ENCODE measurements at regions of chr4 and their contacts with region 1.

Region 1: DNA sequence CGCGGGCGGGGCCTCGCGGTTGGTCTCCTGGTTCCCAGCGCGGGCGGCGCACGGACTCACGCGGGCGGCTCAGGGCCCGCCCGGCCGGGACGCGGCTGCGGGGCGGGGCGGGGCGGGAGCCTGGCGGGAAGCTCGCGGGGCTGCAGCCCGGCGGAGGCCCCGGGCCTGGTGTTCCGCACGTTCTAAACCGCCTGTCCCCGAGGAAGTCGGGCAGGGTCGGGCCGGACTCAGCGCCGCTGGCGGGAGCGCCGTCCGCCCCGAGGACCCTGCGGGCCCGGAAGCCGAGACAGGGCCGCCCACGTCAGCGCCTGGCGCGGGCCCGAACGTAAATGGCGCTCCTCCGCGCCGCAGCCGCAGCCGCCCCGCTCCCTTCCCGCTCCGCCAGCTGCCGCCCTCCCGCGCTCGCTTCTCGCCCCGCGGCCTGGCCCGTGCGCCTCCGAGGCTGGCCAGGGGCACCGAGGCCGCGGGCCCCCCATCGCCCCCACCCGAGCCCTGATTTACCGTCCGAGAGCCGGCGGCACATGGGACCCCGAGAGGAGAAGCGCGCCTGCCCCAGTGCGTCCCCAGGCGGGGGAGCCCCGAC is 309 bp upstream of the CTBP1 start:
- DNase-seq: peak; percentile 89
- H3K4me3 ChIP-seq: peak overlapping the region; percentile 80 to 92 (median 90)
- H3K27ac ChIP-seq: peak overlapping the region; percentile 95 to 99 (median 96)
- H3K4me1 ChIP-seq: peaks cover 39 to 47% (median 43%) of the 10 kb centered on the region in 4 donors
- H3K27me3 ChIP-seq: no peaks in the 10 kb centered on the region
- CTCF ChIP-seq: no peak
- EP300 ChIP-seq: no peak
- POLR2A ChIP-seq: no peak

Region 2: GRCh38 chr4:1167247-1167949 is 81.8 kb before region 1 on chr4:
- in situ Hi-C with region 1: loop called in 2 of 4 experiments (anchors 25 kb)
- intact Hi-C with region 1: loop called (anchors 2 kb)
- DNase-seq: peak; percentile 92
- H3K4me3 ChIP-seq: peak overlapping the region; percentile 35 to 78 (median 52)
- H3K27ac ChIP-seq: peak overlapping the region; percentile 58 to 83 (median 78)
- H3K4me1 ChIP-seq: peaks cover 5 to 32% (median 29%) of the 10 kb centered on the region in 4 donors
- H3K27me3 ChIP-seq: peaks cover 39% of the 10 kb centered on the region
- CTCF ChIP-seq: peak; percentile 90 to 96 (median 95)
- EP300 ChIP-seq: no peak
- POLR2A ChIP-seq: peak; percentile 36

Region 3: GRCh38 chr4:1209821-1210210 is 39.4 kb before region 1 on chr4:
- in situ Hi-C with region 1: no loop called
- intact Hi-C with region 1: loop called (anchors 5 kb)
- DNase-seq: peak; percentile 66
- H3K4me3 ChIP-seq: no peak overlapping the region
- H3K27ac ChIP-seq: peak overlapping the region; percentile 75 to 87 (median 79)
- H3K4me1 ChIP-seq: peaks cover 37 to 68% (median 49%) of the 10 kb centered on the region in 4 donors
- H3K27me3 ChIP-seq: no peaks in the 10 kb centered on the region
- CTCF ChIP-seq: no peak
- EP300 ChIP-seq: no peak
- POLR2A ChIP-seq: no peak

Region 4: GRCh38 chr4:1337376-1337860 is 88.2 kb after region 1 on chr4:
- in situ Hi-C with region 1: loop called in 3 of 4 experiments (anchors 10 kb)
- intact Hi-C with region 1: no loop called
- DNase-seq: peak; percentile 50
- H3K4me3 ChIP-seq: no peak overlapping the region
- H3K27ac ChIP-seq: no peak overlapping the region
- H3K4me1 ChIP-seq: no peaks in the 10 kb centered on the region
- H3K27me3 ChIP-seq: no peaks in the 10 kb centered on the region
- CTCF ChIP-seq: no peak
- EP300 ChIP-seq: no peak
- POLR2A ChIP-seq: no peak

Region 5: DNA sequence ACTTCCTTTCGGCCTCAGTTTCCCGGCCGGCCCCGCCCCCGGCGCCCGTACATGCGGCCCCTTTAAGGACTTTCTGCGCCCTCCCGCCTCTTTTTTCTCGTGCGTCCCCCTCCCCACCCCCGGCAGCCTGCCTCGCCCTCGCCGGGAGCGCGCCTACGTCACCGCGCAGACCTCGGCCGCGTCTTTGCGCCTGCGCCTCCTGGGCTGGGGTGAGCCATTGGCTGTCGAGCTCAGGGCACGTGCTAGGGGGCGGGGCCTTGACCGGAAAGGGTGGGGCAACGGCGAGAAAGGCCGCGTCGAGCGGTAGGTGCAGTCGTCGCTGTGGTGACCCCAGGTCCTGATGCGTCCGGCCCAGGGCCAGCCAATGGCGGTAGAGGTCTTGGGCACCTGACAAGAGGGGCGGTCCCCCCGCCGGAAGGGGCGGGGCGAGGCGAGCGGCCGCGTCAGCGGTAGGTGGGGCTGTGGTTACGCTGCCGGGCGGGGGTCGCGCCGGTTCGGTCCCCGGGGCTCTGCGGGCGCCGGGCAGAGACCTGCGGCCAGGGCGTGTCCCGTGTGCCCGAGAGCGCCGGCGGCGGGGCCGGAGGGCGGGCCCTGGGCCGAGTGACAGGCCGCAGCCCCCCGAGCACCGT is 97.7 kb after region 1 on chr4 and contains the start of gene UVSSA:
- in situ Hi-C with region 1: loop called in 2 of 4 experiments (anchors 10 kb)
- intact Hi-C with region 1: no loop called
- DNase-seq: peak; percentile 100
- H3K4me3 ChIP-seq: peak within 1 kb of the TSS; percentile 58 to 96 (median 92)
- H3K27ac ChIP-seq: peak within 1 kb of the TSS; percentile 95 to 100 (median 100)
- H3K4me1 ChIP-seq: peaks cover 10 to 27% (median 22%) of the 10 kb centered on the region in 4 donors
- H3K27me3 ChIP-seq: no peaks in the 10 kb centered on the region
- CTCF ChIP-seq: no peak
- EP300 ChIP-seq: peak; percentile 3
- POLR2A ChIP-seq: peak; percentile 54
- total RNA-seq, gene UVSSA: 13.5 to 114 (median 34.2) TPM